ENCODE measurements at regions of chr17 and their contacts with region 1.

Region 1: GRCh38 chr17:3683054-3683511 is 12.9 kb downstream of the P2RX5 start:
- DNase-seq: peak; percentile 63 to 93
- ATAC-seq: peak; percentile 49 to 88; a peak in 5 of 6 replicates
- H3K4me3 ChIP-seq: no peak overlapping the region
- H3K27ac ChIP-seq: no peak overlapping the region
- H3K4me1 ChIP-seq: no peaks in the 10 kb centered on the region
- CTCF ChIP-seq: peak; percentile 85
- EP300 ChIP-seq: no peak
- POLR2A ChIP-seq: no peak
- RAD21 ChIP-seq: peak; percentile 61 to 73

Region 2: GRCh38 chr17:3569534-3570137 is 113.4 kb before region 1 on chr17:
- CTCF ChIA-PET with region 1: no interaction called
- POLR2A ChIA-PET with region 1: no interaction called
- DNase-seq: no peak
- ATAC-seq: peak; percentile 27 to 34; a peak in 3 of 6 replicates
- H3K4me3 ChIP-seq: no peak overlapping the region
- H3K27ac ChIP-seq: no peak overlapping the region
- H3K4me1 ChIP-seq: no peaks in the 10 kb centered on the region; the same call in 2 of the 3 replicates
- CTCF ChIP-seq: no peak
- EP300 ChIP-seq: no peak
- POLR2A ChIP-seq: no peak
- RAD21 ChIP-seq: no peak

Region 3: GRCh38 chr17:3695723-3696411 is 12.8 kb after region 1 on chr17 and contains the start of gene P2RX5:
- CTCF ChIA-PET with region 1: interaction called, 15 read pairs
- POLR2A ChIA-PET with region 1: no interaction called
- DNase-seq: no peak
- ATAC-seq: peak; percentile 69 to 74
- H3K4me3 ChIP-seq: peak within 1 kb of the TSS; percentile 57
- H3K27ac ChIP-seq: peak within 1 kb of the TSS; percentile 73 to 89
- H3K4me1 ChIP-seq: peaks cover 8% of the 10 kb centered on the region; the same call in 2 of the 3 replicates
- CTCF ChIP-seq: no peak
- EP300 ChIP-seq: no peak
- POLR2A ChIP-seq: no peak
- RAD21 ChIP-seq: no peak
- polyA plus RNA-seq, gene P2RX5: 7.8 and 12.2 TPM in 2 replicates

Region 4: GRCh38 chr17:3710951-3711383 is 27.9 kb after region 1 on chr17:
- CTCF ChIA-PET with region 1: interaction called, 11 read pairs
- POLR2A ChIA-PET with region 1: no interaction called
- DNase-seq: no peak
- ATAC-seq: peak; percentile 39 to 42; a peak in 2 of 6 replicates
- H3K4me3 ChIP-seq: no peak overlapping the region
- H3K27ac ChIP-seq: no peak overlapping the region
- H3K4me1 ChIP-seq: no peaks in the 10 kb centered on the region
- CTCF ChIP-seq: no peak
- EP300 ChIP-seq: no peak
- POLR2A ChIP-seq: no peak
- RAD21 ChIP-seq: no peak